Heart left ventricle (tissue), 16 donors: ENCODE measurements at regions of chr21 and their contacts with region 1.

Region 1: GRCh38 chr21:28745131-28746016 is 247.3 kb downstream of the LTN1 start:
- DNase-seq: peak; percentile 69 to 80 (median 73)
- ATAC-seq: peak; percentile 85 to 93 (median 87)
- H3K4me3 ChIP-seq: peak overlapping the region; percentile 19 to 63 (median 51)
- H3K27ac ChIP-seq: peak overlapping the region; percentile 58 to 90 (median 82)
- H3K4me1 ChIP-seq: peaks cover 0 to 29% (median 7%) of the 10 kb centered on the region in 12 donors
- H3K27me3 ChIP-seq: no peaks in the 10 kb centered on the region
- CTCF ChIP-seq: peak; percentile 87 to 98 (median 92)
- POLR2A ChIP-seq: no peak

Region 2: DNA sequence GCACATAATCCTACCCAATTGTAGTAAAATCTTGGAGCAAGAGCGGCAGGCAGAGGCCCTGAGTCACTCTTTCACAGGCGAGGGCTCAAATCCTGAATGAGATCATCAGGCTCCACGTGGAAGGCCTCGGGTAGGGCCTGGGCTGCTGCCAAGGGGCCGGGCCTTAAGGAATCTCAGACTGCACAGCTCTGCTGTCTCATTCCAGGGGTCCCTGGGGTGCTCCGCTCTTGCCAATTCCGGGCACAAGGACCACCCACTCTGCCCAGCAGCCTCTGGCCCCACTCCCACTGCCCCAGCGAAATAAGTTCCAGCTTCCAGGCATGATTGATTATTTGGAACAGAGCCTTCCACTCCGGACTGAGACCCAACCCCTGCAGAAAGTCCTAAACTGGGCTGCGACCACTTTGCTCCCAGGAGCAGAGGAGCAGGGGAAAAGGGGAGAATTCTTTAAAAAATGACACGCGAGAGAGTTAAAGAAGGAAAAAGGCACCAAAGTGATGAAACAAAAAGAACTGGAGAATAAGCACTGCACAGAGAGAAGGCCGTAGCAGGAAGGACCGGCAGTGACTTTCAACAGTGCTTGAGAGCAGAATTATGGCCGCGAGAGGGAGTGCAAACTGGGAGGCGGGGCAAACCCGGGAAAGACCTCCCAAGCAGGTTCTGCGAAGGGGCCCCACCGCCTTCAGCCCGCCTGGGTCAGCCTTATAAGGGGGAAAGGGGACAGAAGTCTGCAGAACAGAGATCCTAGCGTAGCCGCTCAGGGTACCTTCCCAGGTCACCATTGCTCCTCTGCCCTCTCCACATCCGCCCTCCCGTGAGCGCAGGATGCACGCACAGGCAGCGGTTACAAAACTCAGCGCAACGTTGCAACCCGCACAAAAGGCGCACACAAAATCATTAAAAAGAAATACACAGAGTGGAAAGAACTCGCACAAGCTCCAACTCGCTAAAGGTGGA is 1902.1 kb before region 1 on chr21:
- intact Hi-C with region 1: loop called in 7 of 10 experiments (anchors 2 to 5 kb)
- DNase-seq: peak; percentile 93 to 96 (median 94)
- ATAC-seq: peak; percentile 60 to 68 (median 64)
- H3K4me3 ChIP-seq: peak overlapping the region; percentile 61 to 94 (median 84)
- H3K27ac ChIP-seq: peak overlapping the region; percentile 96 to 98 (median 98)
- H3K4me1 ChIP-seq: peaks cover 15 to 65% (median 46%) of the 10 kb centered on the region in 12 donors
- H3K27me3 ChIP-seq: peaks cover 0 to 38% (median 0%) of the 10 kb centered on the region in 9 donors
- CTCF ChIP-seq: peak in 11 of 12 donors; percentile 4 to 54 (median 30)
- POLR2A ChIP-seq: peak in 1 of 2 donors; percentile 23

Region 3: DNA sequence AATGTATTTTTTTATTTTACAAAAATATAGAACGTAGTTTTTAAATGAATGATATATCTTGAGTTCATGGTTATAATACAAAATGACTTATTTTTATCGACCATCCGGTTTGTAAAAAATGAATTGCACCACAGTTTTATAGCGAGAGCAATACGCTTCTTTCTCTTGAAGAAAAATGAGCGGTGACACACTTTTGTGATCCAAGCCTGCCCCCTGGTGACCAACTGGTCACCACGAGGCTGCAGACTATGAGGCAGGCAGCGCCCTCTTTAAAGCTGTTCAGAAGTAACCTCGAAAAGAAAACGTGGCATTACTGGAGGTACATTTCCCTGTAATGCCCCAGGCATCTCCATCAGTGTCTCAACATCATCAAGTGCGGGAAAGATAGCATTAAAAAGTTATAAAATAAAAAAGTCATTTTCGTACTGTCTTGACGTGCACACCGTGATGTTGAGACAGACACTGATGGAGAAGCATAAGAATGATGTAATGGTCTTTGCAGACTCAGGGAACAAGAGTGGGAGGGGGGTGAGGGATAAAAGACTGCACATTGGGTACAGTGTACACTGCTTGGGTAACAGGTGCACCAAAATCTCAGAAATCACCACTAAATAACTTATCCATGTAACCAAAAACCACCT is 1044.3 kb before region 1 on chr21:
- intact Hi-C with region 1: loop called (anchors 5 to 10 kb)
- DNase-seq: peak; percentile 82 to 88 (median 82)
- ATAC-seq: peak; percentile 61 to 92 (median 88)
- H3K4me3 ChIP-seq: no peak overlapping the region
- H3K27ac ChIP-seq: no peak overlapping the region
- H3K4me1 ChIP-seq: peaks cover 0 to 8% (median 0%) of the 10 kb centered on the region in 12 donors
- H3K27me3 ChIP-seq: no peaks in the 10 kb centered on the region
- CTCF ChIP-seq: peak; percentile 72 to 97 (median 92)
- POLR2A ChIP-seq: no peak

Region 4: GRCh38 chr21:27802816-27803475 is 942.4 kb before region 1 on chr21:
- intact Hi-C with region 1: loop called in 1 of 10 experiments (anchors 10 kb)
- DNase-seq: peak in 1 of 5 donors; percentile 9
- ATAC-seq: no peak
- H3K4me3 ChIP-seq: no peak overlapping the region
- H3K27ac ChIP-seq: no peak overlapping the region
- H3K4me1 ChIP-seq: peaks cover 0 to 12% (median 0%) of the 10 kb centered on the region in 12 donors
- H3K27me3 ChIP-seq: no peaks in the 10 kb centered on the region
- CTCF ChIP-seq: peak; percentile 31 to 71 (median 54)
- POLR2A ChIP-seq: no peak

Region 5: DNA sequence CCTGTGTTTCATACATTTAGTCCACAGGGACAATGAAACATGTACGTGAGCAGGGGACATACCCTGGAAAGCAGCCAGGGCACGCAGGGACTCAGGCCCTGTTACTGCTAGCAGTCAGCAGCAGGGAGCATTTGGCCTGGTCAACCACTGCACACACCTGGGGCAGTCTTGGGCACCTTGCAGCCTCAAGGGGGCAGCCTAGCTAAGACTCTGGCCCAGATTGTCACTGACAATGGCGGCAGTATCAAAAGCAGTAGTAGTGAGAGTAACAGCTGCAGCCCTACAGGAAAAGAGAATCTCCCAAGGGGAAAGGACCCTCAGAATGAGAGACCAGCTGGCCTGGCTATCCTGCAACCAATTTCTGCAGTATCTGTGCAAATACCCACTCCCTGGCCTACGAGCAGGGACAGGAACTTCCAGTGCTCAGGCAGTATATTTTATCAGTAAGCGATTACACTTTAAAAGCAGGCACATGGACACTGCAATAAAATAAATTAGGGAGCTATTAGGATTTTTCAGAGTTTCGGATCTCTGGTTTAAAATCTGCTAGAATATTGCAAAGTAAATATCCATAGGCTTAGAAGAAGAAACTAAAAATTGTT is 228.3 kb before region 1 on chr21:
- intact Hi-C with region 1: loop called (anchors 1 to 5 kb)
- DNase-seq: peak; percentile 69 to 81 (median 73)
- ATAC-seq: peak; percentile 95 to 97 (median 96)
- H3K4me3 ChIP-seq: no peak overlapping the region
- H3K27ac ChIP-seq: peak overlapping the region in 1 of 12 donors; percentile 2
- H3K4me1 ChIP-seq: peaks cover 0 to 20% (median 10%) of the 10 kb centered on the region in 12 donors
- H3K27me3 ChIP-seq: no peaks in the 10 kb centered on the region
- CTCF ChIP-seq: peak; percentile 59 to 82 (median 71)
- POLR2A ChIP-seq: no peak

Region 6: DNA sequence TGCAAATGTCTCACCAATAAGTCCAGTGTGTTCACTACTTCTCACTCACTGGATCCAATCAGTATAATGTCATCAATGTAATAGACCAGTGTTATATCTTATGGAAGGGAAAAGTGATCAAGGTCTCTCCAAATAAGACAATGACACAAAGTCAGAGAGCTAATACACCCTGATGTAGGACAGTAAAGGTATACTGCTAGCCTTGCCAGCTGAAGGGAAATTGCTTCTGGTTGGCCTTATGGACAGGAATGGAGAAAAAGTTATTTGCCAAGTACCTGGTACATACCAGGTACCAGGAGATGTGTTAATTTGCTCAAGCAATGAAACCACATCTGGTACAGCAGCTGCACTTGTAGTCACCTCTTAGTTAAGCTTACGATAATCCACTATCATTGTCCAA is 106.3 kb after region 1 on chr21:
- intact Hi-C with region 1: no loop called
- DNase-seq: no peak
- ATAC-seq: no peak
- H3K4me3 ChIP-seq: no peak overlapping the region
- H3K27ac ChIP-seq: no peak overlapping the region
- H3K4me1 ChIP-seq: peaks cover 0 to 4% (median 0%) of the 10 kb centered on the region in 12 donors
- H3K27me3 ChIP-seq: no peaks in the 10 kb centered on the region
- CTCF ChIP-seq: no peak
- POLR2A ChIP-seq: no peak

Region 7: DNA sequence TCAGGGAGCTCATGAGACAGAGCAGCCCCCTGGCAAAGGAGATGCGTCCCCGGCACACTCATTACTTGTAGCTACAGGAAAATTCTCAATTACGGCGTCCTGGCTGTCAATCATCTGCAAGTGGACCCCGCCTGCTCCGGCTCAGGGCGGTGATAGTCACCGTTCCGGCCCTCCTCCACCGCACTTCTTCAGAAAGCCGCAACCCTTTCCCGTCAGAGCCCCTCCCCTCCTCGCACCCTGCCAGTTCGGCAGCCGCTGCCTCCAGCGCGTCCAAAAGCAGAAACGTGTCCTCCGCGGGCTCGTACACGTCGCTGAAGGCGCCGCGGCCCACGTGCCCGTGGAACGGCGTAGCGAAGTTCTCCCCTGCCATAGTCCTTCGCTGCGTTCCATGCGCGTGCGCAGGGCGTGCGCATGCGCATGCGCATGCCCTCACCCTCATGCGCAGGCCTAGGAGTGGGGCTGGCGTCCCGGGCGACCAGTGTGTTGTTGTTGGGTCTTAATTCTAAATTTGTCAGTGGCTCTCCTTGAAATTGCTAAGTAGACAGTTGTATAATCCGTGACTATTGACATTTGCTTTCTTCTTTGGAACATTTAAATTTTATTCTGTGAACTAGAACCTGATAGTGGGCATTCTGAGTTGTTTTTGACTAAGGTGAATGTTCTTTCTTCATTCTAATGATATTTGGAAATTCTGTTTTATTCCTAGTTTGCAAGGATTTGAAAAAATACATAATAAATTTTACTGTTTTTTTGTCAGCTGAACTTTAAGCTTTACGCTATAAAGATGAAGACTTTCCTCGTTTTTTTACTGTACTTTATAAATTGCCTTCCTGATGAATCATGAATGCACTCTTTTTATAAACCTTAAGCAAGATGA is 139.8 kb after region 1 on chr21:
- intact Hi-C with region 1: loop called in 2 of 10 experiments (anchors 10 kb)
- DNase-seq: peak; percentile 87 to 94 (median 92)
- ATAC-seq: peak; percentile 99 to 100 (median 99)
- H3K4me3 ChIP-seq: peak overlapping the region; percentile 34 to 82 (median 62)
- H3K27ac ChIP-seq: peak overlapping the region; percentile 77 to 96 (median 92)
- H3K4me1 ChIP-seq: peaks cover 0 to 18% (median 11%) of the 10 kb centered on the region in 12 donors
- H3K27me3 ChIP-seq: no peaks in the 10 kb centered on the region
- CTCF ChIP-seq: no peak
- POLR2A ChIP-seq: peak in 1 of 2 donors; percentile 75